Activated CD4-positive, alpha-beta T cell treated with anti-CD3 and anti-CD28 coated beads for 36 hours (primary cell): ENCODE measurements at regions of chr11 and their contacts with region 1.

Region 1: DNA sequence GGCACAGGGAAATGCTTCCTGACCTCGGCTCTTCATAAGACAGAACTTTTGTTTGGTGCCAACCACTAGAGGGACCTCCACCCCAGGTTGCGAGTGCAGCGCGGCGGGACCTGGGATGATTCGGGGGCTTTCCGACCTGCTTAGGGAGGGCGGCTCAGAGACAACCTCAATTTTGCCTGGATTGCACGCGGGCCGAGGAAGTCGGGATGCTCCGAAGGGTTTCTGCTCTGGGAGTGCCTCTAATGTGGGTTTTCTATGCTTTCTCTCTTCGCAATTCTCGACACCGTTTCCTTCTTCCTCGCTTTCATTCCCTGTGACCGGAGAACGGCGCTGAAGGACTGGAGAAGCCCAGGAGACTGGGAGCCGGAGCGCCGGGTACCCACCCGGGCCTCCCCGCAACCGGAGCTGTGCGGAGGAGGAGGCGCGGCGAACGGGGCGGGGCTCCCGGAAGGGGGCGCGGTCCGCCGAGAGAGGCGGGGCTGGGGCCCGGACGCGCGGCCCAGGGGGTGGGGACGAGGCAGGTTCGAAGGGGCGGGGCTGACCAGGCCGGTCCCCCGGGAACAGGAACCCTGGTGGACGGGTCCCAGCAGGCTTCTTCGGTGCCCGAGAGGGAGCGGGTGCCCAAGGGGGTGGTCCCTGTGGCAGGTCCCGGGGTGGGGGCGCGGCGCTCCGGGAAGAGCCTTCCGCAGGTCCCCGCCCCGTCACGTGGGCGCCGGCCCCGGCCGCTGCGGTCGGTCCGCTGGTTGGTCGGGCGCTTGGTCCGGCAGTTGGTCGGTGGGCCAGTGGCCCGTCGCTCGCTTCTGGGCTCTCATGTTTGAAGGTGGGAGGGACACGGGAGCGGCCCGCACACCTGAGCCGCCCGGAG is at the start of gene PPFIBP2:
- DNase-seq: peak; percentile 89
- ATAC-seq: peak; percentile 89
- H3K4me3 Mint-ChIP-seq: peak within 1 kb of the TSS; percentile 86
- H3K27ac Mint-ChIP-seq: peak within 1 kb of the TSS; percentile 93
- H3K4me1 Mint-ChIP-seq: peaks cover 45% of the 10 kb centered on the region
- H3K27me3 Mint-ChIP-seq: peaks cover 2% of the 10 kb centered on the region
- total RNA-seq, gene PPFIBP2: 7.9 to 13.2 TPM

Region 2: DNA sequence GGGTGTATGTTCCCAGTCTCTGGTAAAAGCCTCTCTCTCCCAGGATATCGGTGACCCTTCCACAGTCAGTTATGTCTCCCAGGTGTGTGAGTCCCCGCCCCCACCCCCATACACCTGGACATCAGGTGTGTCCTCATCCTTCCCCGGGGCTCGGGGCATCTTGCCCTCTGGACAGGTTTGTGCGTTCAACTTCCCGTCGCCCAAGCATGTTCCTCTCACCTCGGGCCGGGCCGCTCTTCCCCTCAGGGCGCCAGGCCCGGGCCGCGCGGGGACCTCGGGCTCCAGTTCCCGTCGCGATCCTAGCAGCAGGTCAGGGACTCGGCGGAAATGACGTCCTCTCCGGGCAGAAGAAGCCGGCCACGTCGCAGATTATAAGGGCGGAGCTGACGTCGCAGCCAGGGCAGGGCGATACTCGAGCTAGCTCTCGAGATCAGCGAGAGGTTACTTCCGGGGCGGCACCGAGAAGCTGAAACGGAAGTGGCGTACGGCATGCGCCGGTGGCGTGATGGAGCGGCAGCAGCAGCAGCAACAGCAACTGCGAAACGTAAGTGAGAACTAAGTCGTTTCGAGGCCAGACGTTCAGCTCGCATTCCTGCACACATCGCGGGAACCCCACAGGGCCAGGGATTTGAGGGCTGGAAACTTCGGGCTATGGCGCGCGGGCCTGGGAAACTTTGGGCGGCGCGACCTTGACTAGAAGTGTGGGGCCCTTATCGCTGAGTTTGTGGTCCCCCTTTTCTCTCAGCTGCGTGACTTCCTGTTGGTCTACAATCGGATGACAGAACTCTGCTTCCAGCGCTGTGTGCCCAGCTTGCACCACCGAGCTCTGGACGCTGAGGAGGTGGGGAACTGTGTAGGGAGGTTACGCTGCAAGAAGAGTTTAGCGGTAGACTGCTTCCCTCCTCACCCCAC is 1032.2 kb before region 1 on chr11 and contains the starts of genes ARFIP2 and TIMM10B:
- CTCF ChIA-PET with region 1: no interaction called
- POLR2A ChIA-PET with region 1: no interaction called
- intact Hi-C with region 1: loop called (anchors 1 to 10 kb)
- DNase-seq: peak; percentile 99
- ATAC-seq: peak; percentile 98
- H3K4me3 Mint-ChIP-seq: peak within 1 kb of the TSS; percentile 80
- H3K27ac Mint-ChIP-seq: peak within 1 kb of the TSS; percentile 92
- H3K4me1 Mint-ChIP-seq: peaks cover 30% of the 10 kb centered on the region
- H3K27me3 Mint-ChIP-seq: no peaks in the 10 kb centered on the region
- total RNA-seq, gene ARFIP2: 36.7 to 40.3 TPM
- total RNA-seq, gene TIMM10B: 27.1 to 39.2 TPM

Region 3: DNA sequence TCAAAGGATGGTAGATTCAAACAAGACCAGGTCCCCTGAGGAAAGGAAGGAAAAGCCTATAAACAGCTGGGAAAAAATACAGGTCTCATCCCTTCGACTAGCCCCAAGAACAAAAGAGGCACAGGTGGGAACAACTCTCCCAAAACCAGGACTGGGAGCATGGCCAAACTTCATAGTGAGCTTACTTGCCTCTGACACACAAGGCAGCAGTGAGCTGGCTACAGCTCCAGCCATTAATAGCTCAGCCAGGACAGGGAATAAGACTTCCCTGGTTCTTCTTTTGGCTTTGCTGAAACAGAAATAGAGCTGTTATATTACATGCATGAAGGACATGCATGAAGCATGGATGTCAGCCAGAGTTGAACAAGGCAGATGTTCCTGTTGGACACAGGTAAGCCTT is 650.5 kb before region 1 on chr11 and contains the start of gene OR10A2:
- CTCF ChIA-PET with region 1: no interaction called
- POLR2A ChIA-PET with region 1: no interaction called
- intact Hi-C with region 1: no loop called
- DNase-seq: no peak
- ATAC-seq: no peak
- H3K4me3 Mint-ChIP-seq: no peak within 1 kb of the TSS
- H3K27ac Mint-ChIP-seq: no peak within 1 kb of the TSS
- H3K4me1 Mint-ChIP-seq: no peaks in the 10 kb centered on the region
- H3K27me3 Mint-ChIP-seq: peaks cover 8% of the 10 kb centered on the region
- total RNA-seq, gene OR10A2: not detected

Region 4: DNA sequence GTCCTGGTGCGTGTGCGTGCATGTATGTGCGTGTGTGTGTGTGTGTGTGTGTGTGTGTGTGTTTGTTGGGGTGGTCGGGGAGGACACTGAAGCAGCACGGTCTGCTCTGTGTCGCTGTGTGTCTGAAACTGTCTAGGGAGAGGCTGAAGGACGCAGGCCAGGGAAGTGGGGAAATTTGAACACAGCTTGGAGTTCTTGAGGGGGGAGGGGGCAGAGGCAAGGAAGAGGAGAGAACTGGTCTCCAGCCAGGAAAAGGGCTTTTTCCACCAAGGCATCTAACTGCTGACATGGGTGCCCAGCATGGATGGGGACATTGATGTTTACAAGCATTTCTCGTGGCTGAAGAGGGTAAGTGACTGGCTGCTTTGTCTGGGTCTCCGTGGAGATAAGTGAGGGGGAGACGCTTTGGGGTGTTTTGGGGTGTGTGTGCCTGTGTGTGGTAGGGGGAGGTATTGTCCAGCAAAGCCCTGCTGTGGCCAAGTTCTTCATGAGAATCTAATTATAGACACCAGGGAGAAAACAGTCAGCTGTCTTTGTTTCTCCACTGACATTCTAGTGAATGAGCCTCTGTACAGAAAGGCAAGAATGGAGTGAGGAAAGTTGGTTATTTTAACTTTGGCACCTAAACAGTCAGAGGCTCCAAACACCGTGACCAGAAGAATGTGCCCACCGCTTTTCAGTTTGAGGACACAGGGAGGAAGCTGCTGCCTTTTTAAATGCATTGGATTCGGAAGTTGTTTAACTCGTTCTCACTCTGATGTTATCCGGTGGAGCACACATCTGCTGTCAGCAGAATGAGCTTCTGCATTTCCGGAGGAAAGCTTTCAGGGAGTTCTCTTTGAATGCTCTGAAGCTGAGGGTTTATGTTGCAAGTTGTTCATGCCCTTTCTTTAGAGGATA is 64.1 kb after region 1 on chr11:
- CTCF ChIA-PET with region 1: no interaction called
- POLR2A ChIA-PET with region 1: interaction called, 3 read pairs
- intact Hi-C with region 1: loop called in 1 of 2 experiments (anchors 1 kb)
- DNase-seq: peak; percentile 19
- ATAC-seq: peak; percentile 70
- H3K4me3 Mint-ChIP-seq: peak overlapping the region; percentile 29
- H3K27ac Mint-ChIP-seq: peak overlapping the region; percentile 13
- H3K4me1 Mint-ChIP-seq: peaks cover 41% of the 10 kb centered on the region
- H3K27me3 Mint-ChIP-seq: peaks cover 7% of the 10 kb centered on the region

Region 5: GRCh38 chr11:7651140-7651551 is 137.7 kb after region 1 on chr11:
- CTCF ChIA-PET with region 1: no interaction called
- POLR2A ChIA-PET with region 1: no interaction called
- intact Hi-C with region 1: no loop called
- DNase-seq: no peak
- ATAC-seq: no peak
- H3K4me3 Mint-ChIP-seq: no peak overlapping the region
- H3K27ac Mint-ChIP-seq: no peak overlapping the region
- H3K4me1 Mint-ChIP-seq: no peaks in the 10 kb centered on the region
- H3K27me3 Mint-ChIP-seq: no peaks in the 10 kb centered on the region

Region 6: GRCh38 chr11:7688238-7688826 is 174.9 kb after region 1 on chr11:
- CTCF ChIA-PET with region 1: interaction called, 6 read pairs
- POLR2A ChIA-PET with region 1: no interaction called
- intact Hi-C with region 1: loop called (anchors 1 to 2 kb)
- DNase-seq: peak; percentile 38
- ATAC-seq: peak; percentile 44
- H3K4me3 Mint-ChIP-seq: no peak overlapping the region
- H3K27ac Mint-ChIP-seq: no peak overlapping the region
- H3K4me1 Mint-ChIP-seq: peaks cover 5% of the 10 kb centered on the region
- H3K27me3 Mint-ChIP-seq: peaks cover 30% of the 10 kb centered on the region

Region 7: GRCh38 chr11:7986768-7987559 is 473.5 kb after region 1 on chr11 and contains the start of gene EIF3F:
- CTCF ChIA-PET with region 1: no interaction called
- POLR2A ChIA-PET with region 1: no interaction called
- intact Hi-C with region 1: loop called (anchors 1 kb)
- DNase-seq: peak; percentile 93
- ATAC-seq: peak; percentile 99
- H3K4me3 Mint-ChIP-seq: peak within 1 kb of the TSS; percentile 94
- H3K27ac Mint-ChIP-seq: peak within 1 kb of the TSS; percentile 99
- H3K4me1 Mint-ChIP-seq: peaks cover 37% of the 10 kb centered on the region
- H3K27me3 Mint-ChIP-seq: no peaks in the 10 kb centered on the region
- total RNA-seq, gene EIF3F: 270 to 289 TPM